Activated CD4-positive, alpha-beta memory T cell treated with anti-CD3 and anti-CD28 coated beads for 36 hours (primary cell): ENCODE measurements at regions of chr18 and their contacts with region 1.

Region 1: GRCh38 chr18:28189400-28190239 is 12.7 kb upstream of the CDH2 start:
- DNase-seq: peak; percentile 14
- H3K4me3 Mint-ChIP-seq: no peak overlapping the region
- H3K27ac Mint-ChIP-seq: no peak overlapping the region
- H3K4me1 Mint-ChIP-seq: no peaks in the 10 kb centered on the region
- H3K27me3 Mint-ChIP-seq: no peaks in the 10 kb centered on the region

Region 2: GRCh38 chr18:27685807-27686412 is 503.7 kb before region 1 on chr18:
- CTCF ChIA-PET with region 1: no interaction called
- POLR2A ChIA-PET with region 1: no interaction called
- intact Hi-C with region 1: loop called (anchors 5 kb)
- DNase-seq: no peak
- H3K4me3 Mint-ChIP-seq: no peak overlapping the region
- H3K27ac Mint-ChIP-seq: no peak overlapping the region
- H3K4me1 Mint-ChIP-seq: no peaks in the 10 kb centered on the region
- H3K27me3 Mint-ChIP-seq: no peaks in the 10 kb centered on the region

Region 3: DNA sequence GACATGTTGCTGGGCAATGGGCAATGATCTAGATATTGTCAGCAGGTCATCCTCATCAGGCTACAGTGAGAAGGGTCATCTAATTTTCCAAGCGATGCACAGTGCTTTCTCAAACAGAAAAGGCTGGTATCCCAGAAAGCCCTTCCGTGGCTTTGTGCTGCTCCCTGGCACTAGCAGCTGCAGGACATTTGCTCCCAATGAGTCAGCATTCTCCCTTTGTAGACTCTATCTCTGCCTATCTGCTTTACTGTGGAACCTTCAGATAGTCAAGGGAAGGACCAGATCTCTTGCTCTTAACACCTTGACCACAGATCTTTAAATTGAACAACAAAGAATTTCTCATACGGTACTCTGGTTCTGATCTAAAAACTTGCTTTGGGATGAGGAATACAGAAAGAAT is 114.1 kb before region 1 on chr18:
- CTCF ChIA-PET with region 1: no interaction called
- POLR2A ChIA-PET with region 1: no interaction called
- intact Hi-C with region 1: no loop called
- DNase-seq: no peak
- H3K4me3 Mint-ChIP-seq: no peak overlapping the region
- H3K27ac Mint-ChIP-seq: no peak overlapping the region
- H3K4me1 Mint-ChIP-seq: no peaks in the 10 kb centered on the region
- H3K27me3 Mint-ChIP-seq: no peaks in the 10 kb centered on the region

Region 4: GRCh38 chr18:28204154-28204553 is 14.5 kb after region 1 on chr18:
- CTCF ChIA-PET with region 1: no interaction called
- POLR2A ChIA-PET with region 1: no interaction called
- intact Hi-C with region 1: no loop called
- DNase-seq: no peak
- H3K4me3 Mint-ChIP-seq: no peak overlapping the region
- H3K27ac Mint-ChIP-seq: no peak overlapping the region
- H3K4me1 Mint-ChIP-seq: no peaks in the 10 kb centered on the region
- H3K27me3 Mint-ChIP-seq: no peaks in the 10 kb centered on the region

Region 5: DNA sequence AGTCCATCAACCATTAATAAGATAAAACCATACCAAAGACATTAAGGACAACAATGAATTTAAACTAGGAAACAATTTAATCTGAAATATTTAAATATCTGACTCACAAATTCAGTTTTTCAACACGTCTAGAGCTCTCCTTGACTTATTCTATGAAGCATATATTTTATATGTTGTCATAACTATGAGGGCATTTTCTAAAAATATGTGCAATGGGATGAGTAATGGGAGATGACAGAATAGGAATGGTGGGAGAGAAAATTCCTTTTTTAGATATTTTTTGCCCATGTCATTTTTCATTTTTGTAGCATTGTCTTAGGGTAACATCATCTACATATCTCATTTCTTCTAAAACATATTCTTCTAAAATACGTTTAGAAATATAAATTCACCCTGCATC is 66.5 kb after region 1 on chr18:
- CTCF ChIA-PET with region 1: no interaction called
- POLR2A ChIA-PET with region 1: no interaction called
- intact Hi-C with region 1: no loop called
- DNase-seq: no peak
- H3K4me3 Mint-ChIP-seq: no peak overlapping the region
- H3K27ac Mint-ChIP-seq: no peak overlapping the region
- H3K4me1 Mint-ChIP-seq: no peaks in the 10 kb centered on the region
- H3K27me3 Mint-ChIP-seq: no peaks in the 10 kb centered on the region